Endothelial cell of umbilical vein (primary cell): ENCODE measurements at regions of chr11 and their contacts with region 1.

Region 1: DNA sequence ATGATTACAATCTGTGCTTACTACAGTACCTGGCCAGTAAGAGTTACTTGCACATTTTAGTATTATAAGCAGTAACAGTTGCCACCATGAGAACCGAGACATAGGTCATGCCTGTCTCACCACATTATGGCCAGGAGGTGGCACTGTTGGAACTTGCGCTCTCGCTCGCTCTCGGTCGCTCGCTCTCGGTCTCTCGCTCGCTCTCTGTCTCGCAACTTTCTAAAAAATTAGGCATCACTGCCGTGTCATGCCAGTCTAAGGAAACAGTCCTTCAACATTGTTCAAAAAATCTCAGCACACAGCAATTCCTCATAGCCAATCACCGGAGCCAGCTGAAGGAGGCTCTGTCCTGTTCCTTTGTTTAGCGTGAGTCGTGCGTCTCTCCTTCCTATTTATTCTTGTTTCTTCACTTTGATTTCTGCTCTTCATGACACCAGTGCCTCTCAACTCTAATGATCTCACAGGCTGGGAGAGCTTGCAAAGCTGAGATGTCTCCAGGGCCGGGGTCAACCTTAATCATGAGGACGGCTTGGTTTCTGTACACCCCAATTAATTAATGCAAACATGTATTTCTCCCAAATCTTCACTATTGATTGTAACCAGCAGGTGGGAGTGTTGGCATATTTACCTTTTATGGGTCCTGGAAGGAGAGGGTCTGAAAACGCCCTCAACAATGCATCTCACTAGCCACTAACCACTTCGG is 6.3 kb upstream of the ADAMTS8 start:
- DNase-seq: peak; percentile 87
- H3K4me3 ChIP-seq: peak overlapping the region; percentile 51 to 70 (median 51)
- H3K27ac ChIP-seq: peak overlapping the region; percentile 6
- H3K4me1 ChIP-seq: no peaks in the 10 kb centered on the region
- H3K27me3 ChIP-seq: peaks cover 10 to 12% of the 10 kb centered on the region in 2 experiments
- CTCF ChIP-seq: peak; percentile 79 to 87
- POLR2A ChIP-seq: no peak

Region 2: GRCh38 chr11:130314750-130315285 is 119.9 kb before region 1 on chr11 and contains the start of gene ZBTB44:
- CTCF ChIA-PET with region 1: no interaction called
- POLR2A ChIA-PET with region 1: no interaction called
- dilution Hi-C with region 1: no loop called
- intact Hi-C with region 1: loop called (anchors 5 kb)
- DNase-seq: peak; percentile 85
- H3K4me3 ChIP-seq: peak within 1 kb of the TSS; percentile 51 to 97 (median 71)
- H3K27ac ChIP-seq: peak within 1 kb of the TSS; percentile 53
- H3K4me1 ChIP-seq: peaks cover 11% of the 10 kb centered on the region
- H3K27me3 ChIP-seq: peaks cover 0 to 6% of the 10 kb centered on the region in 2 experiments
- CTCF ChIP-seq: no peak
- POLR2A ChIP-seq: peak; percentile 65
- total RNA-seq, gene ZBTB44: 20.3 and 24.4 TPM in 2 replicates

Region 3: DNA sequence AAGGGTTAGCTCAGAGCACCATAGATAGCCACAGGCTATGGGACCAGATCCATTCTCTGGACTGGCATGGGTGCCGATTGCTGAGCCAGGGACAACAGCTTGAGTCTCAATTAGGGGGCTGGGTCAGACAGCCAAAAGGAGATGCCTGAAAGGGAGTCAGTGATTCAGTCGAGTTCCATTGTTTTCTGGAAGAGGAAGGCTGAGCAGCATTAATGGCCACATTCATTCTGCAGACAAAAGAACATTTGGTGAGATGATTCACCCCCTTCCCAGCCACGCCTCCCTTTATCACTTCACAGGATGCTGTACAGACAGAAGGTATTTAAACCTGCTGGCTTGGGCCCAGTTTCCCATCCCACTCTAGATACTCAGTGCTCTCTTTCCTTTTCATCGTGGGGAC is 145.7 kb after region 1 on chr11:
- CTCF ChIA-PET with region 1: no interaction called
- POLR2A ChIA-PET with region 1: no interaction called
- dilution Hi-C with region 1: no loop called
- intact Hi-C with region 1: loop called (anchors 5 kb)
- DNase-seq: peak; percentile 61
- H3K4me3 ChIP-seq: no peak overlapping the region
- H3K27ac ChIP-seq: peak overlapping the region; percentile 24
- H3K4me1 ChIP-seq: peaks cover 10% of the 10 kb centered on the region
- H3K27me3 ChIP-seq: no peaks in the 10 kb centered on the region
- CTCF ChIP-seq: no peak
- POLR2A ChIP-seq: no peak

Region 4: DNA sequence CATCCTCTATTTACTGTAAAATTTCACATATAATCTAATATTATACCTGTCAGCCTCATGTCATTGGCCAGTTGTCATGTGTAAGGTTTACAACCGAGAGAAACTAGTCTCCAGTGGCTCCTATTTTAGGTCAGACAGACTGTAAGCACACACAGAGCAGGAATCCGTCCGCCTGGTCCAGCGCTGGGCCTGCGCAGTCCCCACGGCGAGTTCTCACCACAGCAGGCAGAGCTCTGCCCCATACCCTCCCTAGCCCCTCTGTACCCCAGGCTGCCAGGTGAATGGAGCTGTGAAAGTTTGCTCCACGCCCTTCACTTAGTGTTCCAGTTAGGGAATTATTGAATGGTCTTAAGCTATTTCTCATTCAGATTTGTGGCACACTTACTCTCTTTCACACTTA is 417.9 kb after region 1 on chr11:
- CTCF ChIA-PET with region 1: interaction called, 464 read pairs
- POLR2A ChIA-PET with region 1: no interaction called
- dilution Hi-C with region 1: loop called (anchors 25 kb)
- intact Hi-C with region 1: no loop called
- DNase-seq: no peak
- H3K4me3 ChIP-seq: no peak overlapping the region
- H3K27ac ChIP-seq: no peak overlapping the region
- H3K4me1 ChIP-seq: no peaks in the 10 kb centered on the region
- H3K27me3 ChIP-seq: peaks cover 0 to 4% of the 10 kb centered on the region in 2 experiments
- CTCF ChIP-seq: no peak
- POLR2A ChIP-seq: no peak

Region 5: DNA sequence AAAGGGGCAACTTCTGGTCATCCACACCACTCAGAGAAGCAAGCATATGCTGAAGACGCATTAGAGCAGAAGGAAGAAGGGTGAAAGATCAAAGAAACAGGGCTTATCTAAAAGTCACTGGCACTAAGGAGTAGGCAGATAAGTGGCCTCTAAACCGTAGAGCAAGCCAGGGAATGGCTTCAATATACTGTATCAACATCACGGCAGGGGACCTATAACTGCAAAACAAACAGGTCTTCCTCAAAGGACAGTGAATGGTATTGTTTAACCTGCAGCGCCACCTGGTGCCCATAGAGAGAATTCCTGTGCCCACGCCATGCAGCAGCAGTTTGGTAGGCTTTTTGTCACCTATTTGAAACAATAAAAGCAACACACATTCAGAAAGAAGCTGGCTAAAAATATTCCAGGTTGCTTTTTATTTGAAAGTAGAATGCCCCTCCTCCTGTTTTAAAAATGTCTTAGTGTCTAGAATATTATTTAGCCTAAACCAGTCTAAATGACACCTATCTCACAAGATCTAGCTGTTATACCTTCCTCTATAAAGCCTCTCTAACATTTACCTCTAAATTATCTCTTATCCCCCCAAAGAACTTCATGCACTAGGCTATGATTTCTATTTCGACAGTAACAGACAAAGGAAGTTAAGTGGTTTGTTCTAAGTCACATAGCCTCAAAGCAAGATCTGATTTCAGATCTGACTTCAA is 459.8 kb after region 1 on chr11:
- CTCF ChIA-PET with region 1: interaction called, 125 read pairs
- POLR2A ChIA-PET with region 1: no interaction called
- dilution Hi-C with region 1: no loop called
- intact Hi-C with region 1: loop called (anchors 1 kb)
- DNase-seq: peak; percentile 90
- H3K4me3 ChIP-seq: no peak overlapping the region
- H3K27ac ChIP-seq: peak overlapping the region; percentile 13
- H3K4me1 ChIP-seq: peaks cover 57% of the 10 kb centered on the region
- H3K27me3 ChIP-seq: no peaks in the 10 kb centered on the region
- CTCF ChIP-seq: peak; percentile 72 to 86
- POLR2A ChIP-seq: no peak

Region 6: DNA sequence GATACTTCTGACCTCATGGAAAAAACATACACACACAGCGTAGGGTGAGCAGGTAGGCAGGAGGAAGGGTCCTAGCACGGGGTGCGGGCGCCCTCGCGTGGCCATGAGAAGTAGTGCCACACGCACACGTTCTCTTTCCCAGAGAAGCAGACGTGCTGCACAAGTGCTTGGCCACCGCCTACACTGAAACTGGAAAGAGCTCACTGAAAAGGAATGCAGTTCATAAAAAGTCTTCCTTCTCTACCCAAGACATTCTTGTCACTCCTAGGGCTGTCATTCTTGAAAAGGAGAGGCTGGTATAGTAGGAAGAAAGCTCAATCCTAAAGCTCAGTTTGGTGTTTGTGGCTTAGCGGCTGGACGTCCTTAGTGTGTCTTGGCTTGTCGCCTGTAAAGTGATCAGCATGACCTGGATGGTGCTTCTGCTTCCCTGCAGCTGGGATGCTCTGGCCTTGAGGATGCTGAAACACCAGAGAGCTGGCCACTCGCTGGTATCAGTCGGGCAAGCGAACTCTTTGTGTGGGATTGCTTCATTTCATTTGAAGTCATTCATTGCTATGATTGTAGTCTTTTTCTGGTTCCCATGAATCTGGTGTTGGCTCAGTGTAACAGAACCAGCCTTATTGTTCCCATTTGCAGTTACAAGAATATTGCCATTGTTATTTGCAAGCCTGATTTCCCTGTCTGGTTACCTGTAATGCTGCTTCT is 1239.5 kb after region 1 on chr11:
- CTCF ChIA-PET with region 1: interaction called, 74 read pairs
- POLR2A ChIA-PET with region 1: no interaction called
- dilution Hi-C with region 1: no loop called
- intact Hi-C with region 1: loop called (anchors 1 kb)
- DNase-seq: peak; percentile 62
- H3K4me3 ChIP-seq: no peak overlapping the region
- H3K27ac ChIP-seq: no peak overlapping the region
- H3K4me1 ChIP-seq: no peaks in the 10 kb centered on the region
- H3K27me3 ChIP-seq: peaks cover 0 to 4% of the 10 kb centered on the region in 2 experiments
- CTCF ChIP-seq: peak; percentile 94 to 96
- POLR2A ChIP-seq: no peak